ENCODE measurements at regions of chr12 and their contacts with region 1.

Region 1: DNA sequence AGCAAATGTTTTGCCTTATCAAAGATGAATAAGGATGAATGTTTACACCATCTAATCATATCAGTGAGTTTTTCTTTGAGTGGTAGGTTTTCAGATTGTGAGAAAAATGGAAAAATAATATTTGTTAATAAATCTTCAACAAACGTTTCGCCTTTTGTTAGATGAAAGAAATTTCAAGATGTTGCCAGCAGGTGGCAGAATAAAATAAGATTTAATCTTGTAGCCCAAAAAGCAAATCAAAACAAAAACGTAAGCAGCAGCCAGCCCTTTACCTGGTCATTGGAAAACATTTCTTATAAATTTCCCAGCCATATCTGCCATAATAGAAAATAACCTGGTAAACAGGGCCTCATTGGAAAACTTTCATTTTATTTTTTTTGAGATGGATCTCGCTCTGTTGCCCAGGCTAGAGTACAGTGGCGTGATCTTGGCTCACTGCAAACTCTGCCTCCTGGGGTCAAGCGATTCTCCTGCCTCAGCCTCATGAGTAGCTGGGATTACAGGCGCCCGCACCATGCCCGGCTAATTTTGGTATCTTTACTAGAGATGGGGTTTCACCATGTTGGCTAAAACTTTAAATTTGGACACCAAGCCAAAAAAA is 15.4 kb upstream of the TMEM120B start:
- DNase-seq: peak in 2 of 4 donors; percentile 18 to 58
- ATAC-seq: peak; percentile 71
- H3K4me3 ChIP-seq: no peak overlapping the region
- H3K27ac ChIP-seq: no peak overlapping the region
- H3K4me1 ChIP-seq: no peaks in the 10 kb centered on the region
- H3K27me3 ChIP-seq: no peaks in the 10 kb centered on the region
- CTCF ChIP-seq: peak; percentile 17 to 79 (median 65)
- POLR2A ChIP-seq: no peak

Region 2: DNA sequence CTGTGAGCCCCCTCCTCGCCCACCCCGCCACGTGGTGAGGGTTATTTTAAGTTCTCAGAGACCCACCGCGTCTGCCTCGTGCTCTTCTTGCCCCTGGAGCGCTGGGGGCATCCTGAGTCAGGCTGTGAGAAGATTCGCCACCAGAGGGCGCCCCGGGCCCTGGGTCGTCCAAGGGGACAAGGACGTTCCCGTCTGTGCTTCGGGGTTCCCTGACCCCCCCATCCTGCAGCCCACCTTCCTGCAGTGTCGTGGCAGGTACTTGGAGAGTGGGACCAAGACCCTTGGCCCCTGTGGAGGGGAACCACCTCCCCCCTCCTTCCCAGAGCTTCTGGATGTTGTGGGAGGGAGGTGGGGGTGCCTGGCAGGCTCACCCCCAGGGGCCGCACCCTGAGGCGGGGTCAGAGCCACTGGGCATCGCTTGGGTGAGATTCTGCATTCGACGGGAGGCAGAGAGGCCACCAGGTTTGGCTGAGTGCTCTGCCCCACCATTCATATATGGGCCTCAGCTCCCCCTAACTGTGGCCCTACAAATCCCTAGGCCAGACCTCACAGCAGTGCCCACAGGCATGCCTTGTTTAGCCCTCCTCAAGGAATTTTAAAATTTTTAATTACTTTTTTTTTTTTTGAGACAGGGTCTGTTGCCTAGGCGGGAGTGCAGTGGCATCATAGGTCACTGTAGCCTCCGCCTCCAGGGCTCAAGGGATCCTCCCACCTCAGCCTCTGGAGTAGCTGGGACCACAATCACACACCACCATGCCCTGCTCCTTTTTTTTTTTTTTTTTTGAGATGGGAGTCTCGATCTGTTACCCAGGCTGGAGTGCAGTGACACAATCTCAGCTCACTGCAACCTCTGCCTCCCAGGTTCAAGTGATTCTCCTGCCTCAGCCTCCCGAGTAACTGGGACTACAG is 79.2 kb after region 1 on chr12:
- intact Hi-C with region 1: loop called (anchors 5 kb)
- DNase-seq: peak; percentile 71 to 84 (median 79)
- ATAC-seq: peak; percentile 56
- H3K4me3 ChIP-seq: no peak overlapping the region
- H3K27ac ChIP-seq: no peak overlapping the region
- H3K4me1 ChIP-seq: peaks cover 15% of the 10 kb centered on the region
- H3K27me3 ChIP-seq: no peaks in the 10 kb centered on the region
- CTCF ChIP-seq: peak; percentile 62 to 89 (median 75)
- POLR2A ChIP-seq: no peak

Region 3: GRCh38 chr12:121802846-121803630 is 105.8 kb after region 1 on chr12:
- intact Hi-C with region 1: no loop called
- DNase-seq: peak; percentile 87 to 92 (median 88)
- ATAC-seq: peak; percentile 51
- H3K4me3 ChIP-seq: peak overlapping the region; percentile 33 to 58
- H3K27ac ChIP-seq: peak overlapping the region; percentile 96 to 100 (median 100)
- H3K4me1 ChIP-seq: peaks cover 51% of the 10 kb centered on the region
- H3K27me3 ChIP-seq: no peaks in the 10 kb centered on the region
- CTCF ChIP-seq: no peak
- POLR2A ChIP-seq: peak; percentile 89 to 98 (median 98)

Region 4: DNA sequence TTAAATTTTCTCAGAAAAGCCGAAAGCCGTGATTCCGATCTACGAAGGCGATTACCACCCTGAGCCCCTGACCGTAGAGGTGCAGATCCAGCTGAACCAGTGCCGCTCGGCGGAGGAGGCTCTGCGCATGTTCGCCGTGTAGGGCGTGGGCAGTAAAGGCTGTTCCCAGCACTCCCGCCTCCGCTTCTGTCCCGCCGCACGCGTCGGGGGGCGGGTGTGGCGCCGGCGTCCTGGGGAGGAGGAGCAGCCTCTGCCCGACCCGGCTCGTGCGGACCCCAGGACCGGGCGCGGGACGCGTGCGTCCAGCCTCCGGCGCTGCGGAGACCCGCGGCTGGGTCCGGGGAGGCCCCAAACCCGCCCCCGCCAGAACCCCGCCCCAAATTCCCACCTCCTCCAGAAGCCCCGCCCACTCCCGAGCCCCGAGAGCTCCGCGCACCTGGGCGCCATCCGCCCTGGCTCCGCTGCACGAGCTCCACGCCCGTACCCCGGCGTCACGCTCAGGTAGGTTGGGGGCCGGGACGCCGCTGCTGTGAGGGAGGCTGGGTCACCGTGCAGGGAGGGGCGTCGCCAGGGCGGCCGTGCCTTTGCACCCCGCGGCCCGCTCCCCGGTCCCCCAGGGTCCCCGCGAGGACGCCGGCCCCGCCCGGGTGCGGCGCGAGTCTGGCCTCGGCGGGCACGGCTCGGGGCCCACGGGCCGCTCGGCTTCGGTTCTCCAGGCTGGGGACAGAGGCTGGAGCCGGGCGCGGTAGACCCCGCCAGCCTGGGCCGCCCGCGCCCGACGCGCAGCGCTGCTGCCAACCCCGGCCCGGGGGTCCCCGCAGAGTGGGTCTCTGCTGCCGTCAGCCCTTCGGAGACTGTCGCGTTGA is 506.3 kb after region 1 on chr12 and contains the start of gene B3GNT4:
- intact Hi-C with region 1: no loop called
- DNase-seq: peak; percentile 64 to 78 (median 72)
- ATAC-seq: peak; percentile 73
- H3K4me3 ChIP-seq: peak within 1 kb of the TSS in 1 of 2 donors; percentile 31
- H3K27ac ChIP-seq: no peak within 1 kb of the TSS
- H3K4me1 ChIP-seq: peaks cover 21% of the 10 kb centered on the region
- H3K27me3 ChIP-seq: peaks cover 0 to 24% of the 10 kb centered on the region in 2 donors
- CTCF ChIP-seq: no peak
- POLR2A ChIP-seq: no peak
- total RNA-seq, gene B3GNT4: not detected